Mammary epithelial cell (primary cell): ENCODE measurements at regions of chr17 and their contacts with region 1.

Region 1: DNA sequence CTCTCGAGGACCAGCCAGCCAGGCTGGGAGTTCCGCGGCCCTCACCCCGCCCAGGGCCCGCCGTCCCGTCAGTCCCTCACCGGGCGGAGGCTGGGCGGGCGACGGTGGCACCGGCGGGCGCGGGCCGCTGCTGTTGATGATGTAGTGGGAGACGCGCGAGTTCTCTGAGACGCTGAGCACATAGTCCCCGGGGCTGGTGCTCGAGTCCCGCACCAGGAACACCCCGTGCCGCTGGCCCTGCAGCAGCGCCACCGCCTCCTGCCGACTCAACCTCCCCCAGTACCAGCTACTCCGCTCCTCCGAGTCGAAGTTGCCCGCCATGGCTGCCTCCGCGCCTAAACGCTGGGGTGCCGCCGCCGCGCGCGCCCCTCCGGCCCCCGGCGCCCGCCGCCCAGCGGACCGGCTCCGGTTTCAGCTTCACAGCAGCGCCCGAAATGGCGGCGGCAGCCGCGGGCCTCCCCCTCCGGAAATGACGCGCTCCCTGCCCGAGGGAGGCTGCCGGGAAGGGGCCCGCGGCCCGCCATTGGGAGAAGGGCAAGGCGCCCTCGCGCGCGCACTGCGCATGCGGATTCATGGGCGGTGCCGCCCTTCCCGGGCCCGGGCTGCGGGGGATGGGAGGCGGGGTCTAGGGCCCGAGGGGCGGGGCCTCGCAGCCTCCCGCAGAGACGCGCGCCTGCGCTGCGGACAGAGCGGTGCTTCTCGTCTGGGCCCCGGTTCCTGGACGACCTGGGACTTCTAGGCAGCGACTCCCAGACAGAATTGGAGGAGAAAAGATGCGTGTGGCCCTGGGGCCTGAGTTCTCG is at the start of gene CRK:
- DNase-seq: peak; percentile 94
- H3K4me3 ChIP-seq: peak within 1 kb of the TSS; percentile 76 to 97 (median 91)
- H3K27ac ChIP-seq: peak within 1 kb of the TSS; percentile 81
- H3K4me1 ChIP-seq: peaks cover 13% of the 10 kb centered on the region
- H3K27me3 ChIP-seq: no peaks in the 10 kb centered on the region
- CTCF ChIP-seq: no peak
- total RNA-seq, gene CRK: 71.4 to 127 TPM

Region 2: DNA sequence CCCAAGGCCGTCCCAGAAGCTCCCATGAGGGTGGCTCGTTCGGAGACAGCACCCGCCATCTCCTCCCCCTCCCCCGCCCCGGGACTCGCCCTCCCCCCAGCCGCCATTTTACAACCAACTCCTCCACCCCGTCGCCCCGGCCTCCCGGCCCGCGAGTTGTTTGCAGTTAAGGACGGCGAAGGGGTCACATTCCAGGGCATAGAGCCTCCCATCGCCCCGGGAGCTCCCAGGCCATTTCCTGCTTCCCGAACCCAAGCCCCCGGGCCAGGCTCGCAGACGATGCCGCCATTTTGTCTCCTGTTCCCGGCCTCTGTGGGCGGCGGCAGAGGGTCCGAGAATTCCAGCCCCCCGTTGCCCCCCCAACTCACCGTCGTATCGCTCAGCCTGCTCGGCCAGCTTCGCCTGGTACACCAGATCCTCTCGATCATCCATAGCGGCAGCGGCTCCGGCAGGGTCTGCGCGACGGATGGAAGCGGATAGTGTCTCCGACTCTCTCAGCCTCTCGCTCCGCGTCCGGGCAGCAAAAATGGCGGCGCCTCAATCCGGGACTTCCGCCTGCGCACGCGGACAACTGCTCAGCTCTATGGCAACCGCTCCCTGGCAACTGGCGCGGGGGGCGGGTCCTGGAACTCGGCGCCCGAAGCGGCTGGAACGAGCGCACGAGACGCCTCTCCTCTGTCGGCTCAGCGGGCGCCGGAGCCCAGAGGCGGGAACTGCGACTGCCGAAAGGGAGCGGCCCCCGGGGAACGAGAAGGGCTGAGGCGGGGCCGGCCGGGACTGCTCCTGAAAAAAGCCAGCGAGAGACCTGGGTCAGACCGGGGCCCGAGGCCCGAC is 56.1 kb before region 1 on chr17 and contains the start of gene YWHAE:
- CTCF ChIA-PET with region 1: no interaction called
- dilution Hi-C with region 1: no loop called
- in situ Hi-C with region 1: no loop called
- intact Hi-C with region 1: loop called (anchors 2 kb)
- DNase-seq: peak; percentile 96
- H3K4me3 ChIP-seq: peak within 1 kb of the TSS; percentile 75 to 97 (median 90)
- H3K27ac ChIP-seq: peak within 1 kb of the TSS; percentile 96
- H3K4me1 ChIP-seq: peaks cover 9% of the 10 kb centered on the region
- H3K27me3 ChIP-seq: no peaks in the 10 kb centered on the region
- CTCF ChIP-seq: no peak
- total RNA-seq, gene YWHAE: 528 to 689 TPM

Region 3: GRCh38 chr17:1484676-1485421 is 28.9 kb after region 1 on chr17:
- CTCF ChIA-PET with region 1: no interaction called
- dilution Hi-C with region 1: no loop called
- in situ Hi-C with region 1: no loop called
- intact Hi-C with region 1: loop called (anchors 1 kb)
- DNase-seq: peak; percentile 32
- H3K4me3 ChIP-seq: peak overlapping the region; percentile 59 to 91 (median 69)
- H3K27ac ChIP-seq: peak overlapping the region; percentile 48
- H3K4me1 ChIP-seq: peaks cover 33% of the 10 kb centered on the region
- H3K27me3 ChIP-seq: no peaks in the 10 kb centered on the region
- CTCF ChIP-seq: no peak

Region 4: DNA sequence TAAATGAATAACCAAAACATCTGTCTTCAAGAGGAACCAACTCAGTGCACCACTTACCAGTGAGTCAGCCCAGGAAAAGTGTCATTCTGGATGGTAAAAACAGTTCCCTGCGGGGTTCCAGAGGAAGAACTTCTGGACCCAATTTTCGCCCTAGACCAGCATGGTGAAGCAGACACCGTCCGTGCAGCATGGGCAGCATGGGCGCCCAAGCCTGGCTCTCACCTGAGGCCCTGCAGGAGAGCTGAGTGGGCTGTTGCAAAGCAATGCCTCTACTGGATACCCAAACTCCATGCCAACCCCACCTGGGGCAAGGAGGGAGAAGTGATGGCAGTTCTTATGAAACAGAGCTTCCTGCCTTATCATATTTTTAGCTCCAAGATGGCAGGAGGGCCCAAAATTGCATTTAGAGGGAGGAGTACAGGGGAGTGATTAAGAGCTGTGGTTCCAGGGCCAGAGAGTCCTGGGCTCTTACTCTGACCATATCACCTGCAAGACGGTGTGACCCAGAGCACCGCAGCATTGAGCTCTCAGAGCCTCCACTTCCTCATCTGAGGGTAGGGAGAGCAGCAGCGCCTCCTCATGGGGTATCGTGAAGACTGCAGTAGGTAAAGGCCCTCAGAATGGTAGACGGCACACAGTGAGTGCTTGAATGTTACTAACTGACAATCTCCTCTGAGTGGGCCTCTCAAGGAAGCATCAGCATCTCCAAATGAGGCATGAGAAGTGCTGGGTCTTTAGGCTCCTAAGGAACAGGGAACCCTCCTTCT is 77.0 kb after region 1 on chr17:
- CTCF ChIA-PET with region 1: no interaction called
- dilution Hi-C with region 1: no loop called
- in situ Hi-C with region 1: no loop called
- intact Hi-C with region 1: no loop called
- DNase-seq: no peak
- H3K4me3 ChIP-seq: no peak overlapping the region
- H3K27ac ChIP-seq: no peak overlapping the region
- H3K4me1 ChIP-seq: no peaks in the 10 kb centered on the region
- H3K27me3 ChIP-seq: no peaks in the 10 kb centered on the region
- CTCF ChIP-seq: peak; percentile 2 to 26

Region 5: DNA sequence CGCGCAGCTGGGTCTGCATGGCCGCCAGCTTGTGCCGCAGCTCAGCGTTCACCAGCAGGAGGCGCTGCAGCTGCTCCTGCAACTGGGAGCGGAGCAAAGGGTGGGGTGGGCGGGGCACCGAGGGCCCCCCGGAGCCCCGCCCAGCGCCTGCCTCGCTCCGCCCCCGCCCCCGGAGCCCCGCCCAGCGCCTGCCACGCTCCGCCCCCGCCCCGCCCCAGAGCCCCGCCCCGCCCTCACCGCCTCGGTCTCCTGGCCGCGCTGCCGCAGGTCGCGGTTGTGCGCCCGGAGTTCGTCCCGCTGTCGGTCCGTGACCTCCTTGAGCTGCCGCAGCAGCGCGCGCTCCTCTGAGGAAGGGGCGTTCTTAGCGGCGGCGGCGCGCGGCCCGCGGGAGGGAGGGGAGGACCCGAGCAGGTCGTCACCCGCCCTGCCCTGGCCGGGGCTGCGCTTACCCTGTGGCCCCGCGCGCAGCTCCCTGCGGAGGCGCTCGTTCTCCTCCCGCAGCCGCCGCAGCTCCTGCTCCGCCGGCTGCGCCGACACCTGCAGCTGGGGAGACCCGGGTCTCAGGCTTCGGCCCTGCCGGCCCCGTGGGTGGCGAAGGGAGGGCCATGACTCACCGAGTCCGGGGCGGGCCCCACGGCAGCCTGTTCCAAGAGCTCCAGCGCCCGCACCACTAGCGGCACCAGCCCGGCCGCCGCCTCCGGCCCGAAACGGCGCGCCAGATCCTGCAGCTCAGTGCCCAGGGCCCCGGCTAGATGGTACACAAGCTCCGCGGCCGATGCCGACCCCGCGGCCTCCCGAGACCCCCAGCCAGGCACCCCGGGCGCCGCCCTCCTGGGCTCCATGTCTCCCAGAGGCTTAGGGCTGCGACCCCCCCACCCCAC is 193.2 kb after region 1 on chr17:
- CTCF ChIA-PET with region 1: no interaction called
- dilution Hi-C with region 1: no loop called
- in situ Hi-C with region 1: no loop called
- intact Hi-C with region 1: loop called (anchors 10 kb)
- DNase-seq: peak; percentile 86
- H3K4me3 ChIP-seq: peak overlapping the region; percentile 34 to 77 (median 63)
- H3K27ac ChIP-seq: peak overlapping the region; percentile 34
- H3K4me1 ChIP-seq: peaks cover 41% of the 10 kb centered on the region
- H3K27me3 ChIP-seq: no peaks in the 10 kb centered on the region
- CTCF ChIP-seq: peak; percentile 72 to 85